CD14-positive monocyte (primary cell): ENCODE measurements at regions of chr6 and their contacts with region 1.

Region 1: DNA sequence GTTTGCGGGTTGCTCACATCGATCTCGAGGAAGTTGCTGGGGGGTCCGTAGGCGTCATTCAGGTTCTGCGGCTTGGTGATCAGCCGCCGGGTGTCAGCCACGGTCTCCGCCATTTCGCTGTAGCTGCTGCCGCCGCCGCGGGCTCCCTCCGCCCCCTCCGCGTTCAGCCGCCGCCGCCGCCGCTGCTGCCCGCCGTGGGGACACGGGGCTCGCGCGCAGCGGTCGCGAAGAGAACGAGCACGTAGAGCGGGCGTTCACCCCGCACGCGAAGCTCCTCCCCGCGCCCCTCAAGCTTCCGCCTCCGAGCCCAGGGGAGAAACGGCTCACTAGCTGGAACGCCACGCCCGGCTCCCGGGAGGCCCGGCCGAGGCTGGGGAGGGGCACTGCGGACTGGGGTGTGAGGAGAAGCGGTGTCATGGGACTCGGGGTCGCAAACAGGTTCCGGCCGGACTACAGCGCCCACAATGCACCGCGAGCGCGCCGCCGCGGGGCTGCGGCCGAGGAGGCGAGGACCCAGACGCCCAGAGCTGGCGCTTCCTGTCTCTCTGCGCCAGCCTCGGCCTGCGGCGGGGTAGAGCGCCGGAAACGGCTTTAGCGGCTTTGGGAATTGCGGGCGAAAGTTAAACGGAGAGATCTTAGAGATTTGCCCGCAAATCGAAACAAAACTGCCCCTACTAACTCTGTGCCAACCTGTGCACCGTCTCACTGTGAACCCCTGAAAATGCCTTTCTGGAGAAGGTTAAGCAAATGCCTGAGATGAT is at the start of gene SNX3:
- DNase-seq: peak; percentile 93 to 97 (median 95)
- H3K4me3 ChIP-seq: peak within 1 kb of the TSS; percentile 94 to 98 (median 95)
- H3K4me3 Mint-ChIP-seq: peak within 1 kb of the TSS; percentile 83 to 96
- H3K27ac ChIP-seq: peak within 1 kb of the TSS; percentile 93 to 98
- H3K27ac Mint-ChIP-seq: peak within 1 kb of the TSS; percentile 89 to 97 (median 96)
- H3K4me1 ChIP-seq: peaks cover 24 to 28% of the 10 kb centered on the region in 2 donors
- H3K4me1 Mint-ChIP-seq: peaks cover 28% of the 10 kb centered on the region
- H3K27me3 ChIP-seq: no peaks in the 10 kb centered on the region
- H3K27me3 Mint-ChIP-seq: peaks cover 0 to 3% (median 3%) of the 10 kb centered on the region in 3 donors
- CTCF ChIP-seq: no peak
- polyA plus RNA-seq, gene SNX3: 134 to 441 (median 394) TPM

Region 2: GRCh38 chr6:108211644-108212043 is 49.3 kb before region 1 on chr6:
- intact Hi-C with region 1: no loop called
- DNase-seq: no peak
- H3K4me3 ChIP-seq: no peak overlapping the region
- H3K4me3 Mint-ChIP-seq: no peak overlapping the region
- H3K27ac ChIP-seq: no peak overlapping the region
- H3K27ac Mint-ChIP-seq: no peak overlapping the region
- H3K4me1 ChIP-seq: peaks cover 12% of the 10 kb centered on the region in 2 donors
- H3K4me1 Mint-ChIP-seq: peaks cover 14% of the 10 kb centered on the region
- H3K27me3 ChIP-seq: no peaks in the 10 kb centered on the region
- H3K27me3 Mint-ChIP-seq: no peaks in the 10 kb centered on the region
- CTCF ChIP-seq: no peak

Region 3: GRCh38 chr6:108294727-108295625 is 34.0 kb after region 1 on chr6 and contains the start of gene AFG1L:
- intact Hi-C with region 1: loop called (anchors 1 to 2 kb)
- DNase-seq: peak; percentile 81 to 88 (median 84)
- H3K4me3 ChIP-seq: peak within 1 kb of the TSS; percentile 69 to 93 (median 74)
- H3K4me3 Mint-ChIP-seq: peak within 1 kb of the TSS; percentile 94 to 98
- H3K27ac ChIP-seq: peak within 1 kb of the TSS; percentile 95 to 97
- H3K27ac Mint-ChIP-seq: peak within 1 kb of the TSS; percentile 97 to 100 (median 99)
- H3K4me1 ChIP-seq: peaks cover 12 to 17% of the 10 kb centered on the region in 2 donors
- H3K4me1 Mint-ChIP-seq: peaks cover 27% of the 10 kb centered on the region
- H3K27me3 ChIP-seq: no peaks in the 10 kb centered on the region
- H3K27me3 Mint-ChIP-seq: no peaks in the 10 kb centered on the region
- CTCF ChIP-seq: no peak
- polyA plus RNA-seq, gene AFG1L: 0.95 to 2.8 (median 2.7) TPM

Region 4: GRCh38 chr6:108526739-108527174 is 265.8 kb after region 1 on chr6:
- intact Hi-C with region 1: no loop called
- DNase-seq: peak; percentile 6 to 40 (median 33)
- H3K4me3 ChIP-seq: no peak overlapping the region
- H3K4me3 Mint-ChIP-seq: no peak overlapping the region
- H3K27ac ChIP-seq: no peak overlapping the region
- H3K27ac Mint-ChIP-seq: no peak overlapping the region
- H3K4me1 ChIP-seq: no peaks in the 10 kb centered on the region
- H3K4me1 Mint-ChIP-seq: peaks cover 4% of the 10 kb centered on the region
- H3K27me3 ChIP-seq: no peaks in the 10 kb centered on the region
- H3K27me3 Mint-ChIP-seq: peaks cover 0 to 2% (median 0%) of the 10 kb centered on the region in 3 donors
- CTCF ChIP-seq: peak; percentile 75